Activated CD4-positive, alpha-beta T cell treated with anti-CD3 and anti-CD28 coated beads, Interleukin-2, amount 10 ng/mL, durations not matched to agents 24 days and 14 days (primary cell): ENCODE measurements at regions of chr3 and their contacts with region 1.

Region 1: GRCh38 chr3:51682079-51682478 is 11.0 kb downstream of the TEX264 start:
- DNase-seq: peak; percentile 95
- H3K4me3 Mint-ChIP-seq: peak overlapping the region; percentile 80
- H3K27ac Mint-ChIP-seq: peak overlapping the region; percentile 72
- H3K4me1 Mint-ChIP-seq: peaks cover 81% of the 10 kb centered on the region
- H3K27me3 Mint-ChIP-seq: no peaks in the 10 kb centered on the region

Region 2: GRCh38 chr3:51637941-51638471 is 44.1 kb before region 1 on chr3:
- intact Hi-C with region 1: loop called (anchors 1 kb)
- DNase-seq: peak; percentile 79
- H3K4me3 Mint-ChIP-seq: no peak overlapping the region
- H3K27ac Mint-ChIP-seq: no peak overlapping the region
- H3K4me1 Mint-ChIP-seq: peaks cover 4% of the 10 kb centered on the region
- H3K27me3 Mint-ChIP-seq: no peaks in the 10 kb centered on the region

Region 3: GRCh38 chr3:51670823-51671733 is 11.0 kb before region 1 on chr3 and contains the start of gene TEX264:
- intact Hi-C with region 1: loop called (anchors 1 kb)
- DNase-seq: peak; percentile 99
- H3K4me3 Mint-ChIP-seq: peak within 1 kb of the TSS; percentile 93
- H3K27ac Mint-ChIP-seq: peak within 1 kb of the TSS; percentile 93
- H3K4me1 Mint-ChIP-seq: peaks cover 61% of the 10 kb centered on the region
- H3K27me3 Mint-ChIP-seq: no peaks in the 10 kb centered on the region
- total RNA-seq, gene TEX264: 45.6 and 47.0 TPM in 2 replicates

Region 4: GRCh38 chr3:51706788-51707731 is 25.0 kb after region 1 on chr3 and contains the start of gene GRM2:
- intact Hi-C with region 1: loop called (anchors 2 kb)
- DNase-seq: peak; percentile 74
- H3K4me3 Mint-ChIP-seq: no peak within 1 kb of the TSS
- H3K27ac Mint-ChIP-seq: no peak within 1 kb of the TSS
- H3K4me1 Mint-ChIP-seq: peaks cover 10% of the 10 kb centered on the region
- H3K27me3 Mint-ChIP-seq: peaks cover 11% of the 10 kb centered on the region
- total RNA-seq, gene GRM2: 0.24 and 0.86 TPM in 2 replicates

Region 5: GRCh38 chr3:51734572-51734907 is 52.5 kb after region 1 on chr3:
- intact Hi-C with region 1: loop called (anchors 1 kb)
- DNase-seq: peak; percentile 81
- H3K4me3 Mint-ChIP-seq: peak overlapping the region; percentile 52
- H3K27ac Mint-ChIP-seq: peak overlapping the region; percentile 83
- H3K4me1 Mint-ChIP-seq: peaks cover 29% of the 10 kb centered on the region
- H3K27me3 Mint-ChIP-seq: peaks cover 8% of the 10 kb centered on the region